MCF 10A (cell line): ENCODE measurements at regions of chr20 and their contacts with region 1.

Region 1: DNA sequence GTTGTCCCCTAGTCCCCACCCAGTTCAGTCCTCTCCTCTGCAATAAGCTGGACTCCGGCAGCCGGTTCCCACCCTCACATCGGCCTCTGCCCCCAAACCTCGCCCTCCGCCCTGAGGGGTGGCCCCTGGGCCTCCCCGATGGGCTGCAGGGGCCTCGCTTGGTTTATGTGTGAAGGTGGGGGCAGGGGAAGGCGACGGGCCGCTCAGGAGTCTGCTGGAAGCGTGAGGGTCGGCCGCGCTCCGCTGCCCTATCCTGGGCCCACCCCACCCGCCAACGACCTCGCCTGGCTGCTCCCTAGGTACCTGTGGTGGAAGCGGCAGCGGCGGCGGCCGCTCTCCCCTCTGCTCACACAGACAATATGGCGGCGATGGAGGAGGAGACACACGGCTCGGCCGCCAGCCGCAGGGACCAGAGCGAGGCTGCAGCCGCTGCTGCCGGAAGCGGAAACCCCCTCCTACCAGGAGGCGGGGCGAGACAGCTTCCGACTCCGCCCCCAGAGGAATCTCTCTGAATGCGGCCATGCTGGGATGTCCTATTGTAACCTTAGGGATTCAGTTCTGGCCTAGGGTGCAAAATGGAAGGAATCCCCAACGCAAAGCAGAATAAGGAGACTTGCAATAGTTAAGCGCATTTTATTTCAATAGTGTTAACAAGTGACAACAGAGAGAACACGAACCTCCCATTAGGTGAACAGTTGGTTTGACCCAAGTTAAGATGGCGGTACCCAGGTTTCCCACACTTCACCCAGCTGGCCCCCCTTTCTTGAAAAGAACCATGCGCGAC is at the start of gene CSNK2A1:
- DNase-seq: peak; percentile 94
- H3K4me3 Mint-ChIP-seq: peak within 1 kb of the TSS; percentile 77
- H3K27ac Mint-ChIP-seq: peak within 1 kb of the TSS; percentile 99
- H3K4me1 Mint-ChIP-seq: peaks cover 27% of the 10 kb centered on the region
- H3K27me3 Mint-ChIP-seq: no peaks in the 10 kb centered on the region
- CTCF ChIP-seq: no peak
- total RNA-seq, gene CSNK2A1: 271 and 297 TPM in 2 replicates

Region 2: DNA sequence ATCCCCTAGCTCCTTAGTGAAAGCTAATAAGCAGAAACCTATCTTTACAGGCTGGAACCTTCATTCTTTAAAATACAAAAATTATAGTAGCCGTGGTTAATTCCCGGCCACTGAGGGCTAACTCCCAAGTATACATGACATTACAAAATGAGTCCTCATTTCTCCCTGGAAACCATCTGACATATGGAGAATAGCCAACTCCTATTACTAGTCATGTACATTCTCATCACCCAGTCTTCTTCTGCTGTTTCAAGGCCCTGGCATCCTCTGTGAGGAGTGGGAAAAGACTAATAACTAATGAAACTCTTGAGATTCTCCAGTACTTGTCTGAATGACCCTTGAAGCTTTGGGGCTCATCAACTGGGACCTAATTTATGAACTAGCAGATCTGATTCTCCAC is 30.1 kb before region 1 on chr20:
- CTCF ChIA-PET with region 1: interaction called, 4 read pairs
- POLR2A ChIA-PET with region 1: interaction called, 20 read pairs
- intact Hi-C with region 1: no loop called
- DNase-seq: no peak
- H3K4me3 Mint-ChIP-seq: no peak overlapping the region
- H3K27ac Mint-ChIP-seq: no peak overlapping the region
- H3K4me1 Mint-ChIP-seq: peaks cover 30% of the 10 kb centered on the region
- H3K27me3 Mint-ChIP-seq: no peaks in the 10 kb centered on the region
- CTCF ChIP-seq: no peak

Region 3: GRCh38 chr20:528923-529604 is 14.5 kb before region 1 on chr20:
- CTCF ChIA-PET with region 1: interaction called, 3 read pairs
- POLR2A ChIA-PET with region 1: interaction called, 74 read pairs
- intact Hi-C with region 1: no loop called
- DNase-seq: peak; percentile 90
- H3K4me3 Mint-ChIP-seq: no peak overlapping the region
- H3K27ac Mint-ChIP-seq: peak overlapping the region; percentile 95
- H3K4me1 Mint-ChIP-seq: peaks cover 34% of the 10 kb centered on the region
- H3K27me3 Mint-ChIP-seq: no peaks in the 10 kb centered on the region
- CTCF ChIP-seq: no peak